Prostate gland (tissue), 2 donors: ENCODE measurements at regions of chr2 and their contacts with region 1.

Region 1: GRCh38 chr2:206159346-206160124 is at the starts of genes EEF1B2 and NDUFS1:
- DNase-seq: peak; percentile 98
- H3K4me3 ChIP-seq: peak within 1 kb of the TSS; percentile 65 to 76
- H3K27ac ChIP-seq: peak within 1 kb of the TSS; percentile 91 to 98
- H3K4me1 ChIP-seq: peaks cover 7% of the 10 kb centered on the region
- H3K27me3 ChIP-seq: no peaks in the 10 kb centered on the region
- CTCF ChIP-seq: peak in 1 of 4 experiments; percentile 14
- POLR2A ChIP-seq: peak; percentile 55
- total RNA-seq, gene EEF1B2: 305 to 491 TPM
- total RNA-seq, gene NDUFS1: 74.1 to 80.1 TPM

Region 2: DNA sequence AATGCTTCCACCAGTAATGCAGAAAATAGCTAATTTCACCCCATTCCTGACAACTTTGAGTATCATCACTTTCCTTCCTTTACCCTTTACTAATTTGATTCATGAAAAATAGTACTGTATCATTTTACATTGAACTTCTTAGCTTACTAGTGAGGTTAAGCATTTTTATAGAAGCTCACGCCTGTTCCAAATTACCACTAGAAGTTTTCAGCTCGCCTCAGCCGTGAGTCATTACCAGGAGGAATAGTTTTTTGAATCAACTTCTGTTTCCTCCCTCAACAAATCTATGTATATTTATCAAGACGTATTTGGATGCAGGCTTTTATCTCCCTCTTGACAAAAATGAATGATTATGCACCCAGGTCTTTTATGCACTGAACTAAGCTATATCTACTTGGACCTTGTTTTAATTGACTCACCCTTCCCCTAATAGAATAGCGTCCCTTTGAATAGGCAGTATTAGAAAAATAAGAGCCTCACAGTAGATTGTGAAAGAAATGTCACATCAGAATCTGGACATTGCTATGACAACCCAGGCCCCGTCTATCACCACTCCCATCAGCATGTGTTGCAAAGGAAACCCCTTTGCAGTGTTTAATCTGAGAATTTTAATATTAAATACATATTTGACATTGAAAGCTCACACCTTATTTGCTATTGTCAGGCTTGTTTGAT is 684.7 kb before region 1 on chr2:
- intact Hi-C with region 1: no loop called
- DNase-seq: no peak
- H3K4me3 ChIP-seq: no peak overlapping the region
- H3K27ac ChIP-seq: no peak overlapping the region
- H3K4me1 ChIP-seq: no peaks in the 10 kb centered on the region
- H3K27me3 ChIP-seq: no peaks in the 10 kb centered on the region
- CTCF ChIP-seq: no peak
- POLR2A ChIP-seq: no peak

Region 3: DNA sequence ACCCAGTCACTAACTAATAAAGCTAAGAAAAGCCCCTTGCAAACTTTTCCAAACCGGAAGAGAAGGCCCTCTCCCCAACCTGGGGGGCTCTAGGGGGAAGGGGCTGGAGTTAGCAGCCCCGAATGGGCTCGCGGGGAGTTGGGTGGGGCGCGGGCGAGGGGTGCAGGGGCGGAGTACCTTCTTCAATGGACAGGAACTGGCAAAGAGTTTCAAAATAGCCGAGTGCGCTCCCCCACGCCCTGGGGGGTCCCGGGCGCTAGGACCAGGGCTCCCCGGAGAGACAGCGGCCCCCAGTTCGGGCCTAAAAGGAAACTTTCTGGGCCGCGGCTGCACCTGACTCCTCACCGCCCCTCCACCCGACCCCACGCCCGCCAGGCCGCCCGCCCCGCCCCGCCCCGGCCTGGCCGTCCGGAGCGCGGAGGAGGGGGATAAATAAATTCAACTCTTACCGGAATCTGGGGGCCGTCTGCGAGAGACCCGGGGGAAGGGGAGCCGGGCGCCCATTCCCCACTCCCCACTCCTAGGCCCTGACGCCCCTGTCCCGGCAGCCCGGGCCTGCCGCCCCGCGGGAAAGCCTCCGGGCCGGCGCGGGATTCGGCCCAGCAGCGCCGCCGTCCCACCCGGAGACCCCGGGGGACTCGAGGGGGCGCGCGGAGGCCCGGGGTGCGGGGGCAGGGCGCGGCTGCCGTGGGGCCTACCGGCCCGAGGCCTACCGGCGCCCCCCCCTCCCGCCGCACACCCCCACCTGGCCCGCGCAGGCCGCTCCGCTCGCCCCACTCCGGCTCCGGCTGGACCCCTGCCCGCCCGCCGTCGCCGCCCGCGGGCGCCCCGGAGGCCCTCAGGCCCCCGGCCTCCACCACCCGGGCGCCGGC is 74.4 kb before region 1 on chr2:
- intact Hi-C with region 1: loop called (anchors 5 kb)
- DNase-seq: peak; percentile 21
- H3K4me3 ChIP-seq: peak overlapping the region; percentile 80 to 82
- H3K27ac ChIP-seq: peak overlapping the region; percentile 99 to 100
- H3K4me1 ChIP-seq: no peaks in the 10 kb centered on the region
- H3K27me3 ChIP-seq: no peaks in the 10 kb centered on the region
- CTCF ChIP-seq: no peak
- POLR2A ChIP-seq: no peak

Region 4: DNA sequence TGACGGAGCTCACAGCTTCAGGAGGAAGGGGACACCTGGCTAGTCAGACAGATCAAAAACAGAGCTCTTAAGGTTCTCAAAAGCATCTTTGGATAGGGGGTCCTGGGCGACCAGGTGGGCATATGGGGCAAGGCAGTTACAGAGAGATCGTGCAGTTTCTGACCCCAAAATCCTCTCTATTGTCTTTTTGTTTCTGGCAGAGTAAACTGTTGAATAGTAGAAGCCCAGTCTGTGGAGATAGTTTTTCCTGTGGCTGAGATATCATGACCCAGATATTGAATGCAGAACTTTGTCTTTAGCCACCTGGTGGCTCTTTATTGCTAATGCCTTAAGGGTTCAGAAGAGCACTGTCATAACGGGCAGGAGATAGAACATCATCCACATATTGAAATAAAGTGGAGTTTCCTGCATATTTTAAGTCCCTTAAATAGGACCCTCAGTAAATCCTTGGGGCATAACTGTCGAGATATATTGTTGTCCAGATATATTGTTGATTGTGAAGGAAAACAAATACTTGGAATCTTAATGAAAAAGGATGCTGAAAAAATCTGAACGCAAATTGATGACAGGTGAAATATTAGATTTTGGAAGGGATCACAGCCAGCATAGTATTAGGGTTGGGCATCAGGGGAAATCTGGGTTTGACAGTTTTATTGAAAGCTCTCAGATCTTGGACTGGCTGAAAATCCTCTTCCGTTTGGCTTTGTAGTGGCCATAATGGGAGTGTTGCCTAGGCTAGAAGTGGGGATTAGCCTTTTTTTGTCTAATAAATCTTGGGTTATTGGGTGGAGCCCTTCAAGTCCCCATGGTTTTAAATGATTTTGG is 100.9 kb after region 1 on chr2:
- intact Hi-C with region 1: loop called (anchors 10 kb)
- DNase-seq: no peak
- H3K4me3 ChIP-seq: no peak overlapping the region
- H3K27ac ChIP-seq: no peak overlapping the region
- H3K4me1 ChIP-seq: no peaks in the 10 kb centered on the region
- H3K27me3 ChIP-seq: peaks cover 14% of the 10 kb centered on the region
- CTCF ChIP-seq: peak in 1 of 4 experiments; percentile 24
- POLR2A ChIP-seq: no peak